ENCODE measurements at regions of chr10 and their contacts with region 1.

Region 1: GRCh38 chr10:123967396-123968243 is 76.0 kb upstream of the CPXM2 start:
- DNase-seq: no peak

Region 2: DNA sequence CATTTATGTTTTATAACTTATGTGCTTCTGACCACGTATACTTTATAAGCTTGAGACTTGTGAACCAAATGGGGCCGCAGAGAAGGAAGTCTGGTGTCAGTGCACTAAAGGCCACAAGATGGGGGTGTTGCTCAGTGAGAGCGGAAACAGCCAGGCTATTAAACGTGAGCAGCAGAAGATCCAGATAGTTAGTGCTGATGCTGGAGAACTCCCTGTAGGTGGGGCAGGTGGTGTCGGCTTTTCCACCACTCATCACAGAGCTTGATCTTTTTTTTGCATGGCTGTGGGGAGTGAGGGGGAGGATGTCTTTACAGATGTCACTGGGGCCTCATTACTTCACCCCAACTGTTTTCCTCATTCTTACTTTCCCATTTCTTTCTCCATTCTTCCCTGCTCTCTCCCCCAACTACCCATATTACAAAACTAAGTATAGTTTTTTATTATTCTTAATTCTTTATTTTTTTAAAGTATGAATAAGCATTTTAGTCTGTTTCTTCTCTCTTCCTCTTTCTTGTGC is 924.2 kb before region 1 on chr10:
- intact Hi-C with region 1: loop called (anchors 10 kb)
- DNase-seq: no peak

Region 3: DNA sequence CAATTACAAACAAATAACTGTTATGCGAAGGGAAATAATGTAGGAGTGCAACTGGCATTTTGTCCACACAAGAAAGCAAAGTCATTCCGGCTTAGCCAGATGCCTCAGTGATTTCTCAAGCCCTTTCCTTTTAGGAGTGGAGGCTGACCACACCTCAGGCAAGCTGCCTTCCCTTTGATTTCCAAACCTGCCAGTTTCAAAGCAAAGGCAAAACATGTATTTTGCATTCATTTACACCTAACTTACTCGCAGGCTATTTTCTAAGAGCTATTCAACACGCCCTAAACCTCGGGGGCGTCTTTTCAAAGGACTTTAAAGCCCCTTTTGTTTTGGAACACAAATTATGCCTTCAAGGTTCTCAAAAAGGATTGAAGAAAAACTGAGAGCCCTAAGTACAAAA is 185.6 kb before region 1 on chr10:
- intact Hi-C with region 1: no loop called
- DNase-seq: no peak

Region 4: GRCh38 chr10:124450012-124450781 is 482.6 kb after region 1 on chr10 and contains the start of gene NKX1-2:
- intact Hi-C with region 1: no loop called
- DNase-seq: no peak
- total RNA-seq, gene NKX1-2: not detected